MCF 10A (cell line): ENCODE measurements at regions of chr1 and their contacts with region 1.

Region 1: GRCh38 chr1:18820791-18821641 is 38.4 kb downstream of the TAS1R2 start:
- DNase-seq: peak; percentile 70
- H3K4me3 Mint-ChIP-seq: no peak overlapping the region
- H3K27ac Mint-ChIP-seq: no peak overlapping the region
- H3K4me1 Mint-ChIP-seq: peaks cover 7% of the 10 kb centered on the region
- H3K27me3 Mint-ChIP-seq: peaks cover 39% of the 10 kb centered on the region
- CTCF ChIP-seq: peak; percentile 91

Region 2: GRCh38 chr1:18805150-18805879 is 15.7 kb before region 1 on chr1:
- CTCF ChIA-PET with region 1: interaction called, 11 read pairs
- POLR2A ChIA-PET with region 1: no interaction called
- intact Hi-C with region 1: no loop called
- DNase-seq: no peak
- H3K4me3 Mint-ChIP-seq: no peak overlapping the region
- H3K27ac Mint-ChIP-seq: no peak overlapping the region
- H3K4me1 Mint-ChIP-seq: no peaks in the 10 kb centered on the region
- H3K27me3 Mint-ChIP-seq: peaks cover 8% of the 10 kb centered on the region
- CTCF ChIP-seq: no peak

Region 3: DNA sequence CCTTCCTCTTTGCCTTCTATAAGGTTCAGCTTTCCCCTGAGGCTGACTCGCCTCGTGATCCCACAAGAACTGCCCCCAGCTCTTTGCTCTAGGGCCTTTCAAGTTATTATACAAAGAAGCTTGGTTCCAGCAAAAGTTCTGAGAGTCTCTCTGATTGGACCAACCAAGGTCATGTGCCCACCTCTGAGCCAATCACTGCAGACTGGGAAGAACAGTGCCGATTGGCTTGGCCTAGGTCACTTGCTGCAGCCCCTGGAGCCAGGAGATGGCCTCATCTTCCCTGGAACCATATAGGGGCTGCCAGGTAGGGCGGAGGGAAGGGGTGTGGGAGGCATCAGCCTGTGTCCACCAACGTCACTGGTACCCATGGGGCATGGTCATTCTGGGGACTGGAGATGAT is 15.6 kb after region 1 on chr1:
- CTCF ChIA-PET with region 1: interaction called, 12 read pairs
- POLR2A ChIA-PET with region 1: no interaction called
- intact Hi-C with region 1: no loop called
- DNase-seq: no peak
- H3K4me3 Mint-ChIP-seq: no peak overlapping the region
- H3K27ac Mint-ChIP-seq: no peak overlapping the region
- H3K4me1 Mint-ChIP-seq: no peaks in the 10 kb centered on the region
- H3K27me3 Mint-ChIP-seq: peaks cover 10% of the 10 kb centered on the region
- CTCF ChIP-seq: no peak